Endothelial cell of umbilical vein (primary cell): ENCODE measurements at regions of chr3 and their contacts with region 1.

Region 1: GRCh38 chr3:171491361-171491760 is 31.2 kb upstream of the TNIK start:
- DNase-seq: no peak
- H3K4me3 ChIP-seq: no peak overlapping the region
- H3K27ac ChIP-seq: no peak overlapping the region
- H3K4me1 ChIP-seq: no peaks in the 10 kb centered on the region
- H3K27me3 ChIP-seq: no peaks in the 10 kb centered on the region
- CTCF ChIP-seq: no peak
- POLR2A ChIP-seq: no peak

Region 2: DNA sequence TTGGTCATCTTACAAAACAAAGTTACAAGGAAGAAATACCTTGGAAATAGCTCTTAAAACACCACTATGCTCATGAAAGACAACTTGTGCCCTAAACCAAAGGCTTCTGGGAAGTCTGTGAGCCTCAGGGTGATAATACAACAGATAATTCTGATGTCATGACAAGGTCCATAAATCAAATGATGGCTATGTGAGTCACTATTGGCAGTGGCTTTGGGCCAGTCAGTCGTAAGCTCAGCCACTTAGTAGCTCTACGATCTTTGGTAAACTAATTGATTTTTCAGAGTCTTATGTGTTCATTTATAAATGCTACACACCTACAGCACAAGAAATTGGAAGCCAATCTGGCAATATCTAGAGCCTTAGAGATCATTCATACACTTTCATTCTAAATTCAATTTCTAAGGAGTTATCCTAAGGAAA is 44.0 kb before region 1 on chr3:
- CTCF ChIA-PET with region 1: no interaction called
- POLR2A ChIA-PET with region 1: no interaction called
- dilution Hi-C with region 1: no loop called
- intact Hi-C with region 1: no loop called
- DNase-seq: peak; percentile 83
- H3K4me3 ChIP-seq: no peak overlapping the region
- H3K27ac ChIP-seq: no peak overlapping the region
- H3K4me1 ChIP-seq: peaks cover 21% of the 10 kb centered on the region
- H3K27me3 ChIP-seq: no peaks in the 10 kb centered on the region
- CTCF ChIP-seq: no peak
- POLR2A ChIP-seq: no peak

Region 3: DNA sequence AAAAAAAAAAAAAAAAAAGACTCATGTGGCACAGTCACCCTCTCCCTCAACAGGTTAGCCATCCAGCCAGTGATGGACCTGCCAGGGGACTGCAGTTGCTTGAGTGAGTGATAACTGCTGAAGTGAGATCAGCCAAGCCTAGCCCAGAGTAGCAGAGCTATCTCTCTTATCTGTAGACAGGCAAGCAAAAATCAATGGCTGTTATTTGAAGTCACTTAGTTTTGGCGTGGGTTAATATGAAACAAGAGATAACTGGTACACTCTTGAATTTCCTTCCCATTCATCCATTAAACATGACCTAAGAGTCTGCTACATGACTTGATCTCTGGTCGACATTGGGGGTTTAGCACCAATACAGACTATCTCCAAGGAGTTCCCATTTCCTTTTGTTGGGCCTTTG is 20.1 kb after region 1 on chr3:
- CTCF ChIA-PET with region 1: interaction called, 3 read pairs
- POLR2A ChIA-PET with region 1: no interaction called
- dilution Hi-C with region 1: no loop called
- intact Hi-C with region 1: loop called (anchors 2 kb)
- DNase-seq: no peak
- H3K4me3 ChIP-seq: no peak overlapping the region
- H3K27ac ChIP-seq: no peak overlapping the region
- H3K4me1 ChIP-seq: no peaks in the 10 kb centered on the region
- H3K27me3 ChIP-seq: peaks cover 0 to 5% of the 10 kb centered on the region in 2 experiments
- CTCF ChIP-seq: no peak
- POLR2A ChIP-seq: no peak